Spleen (tissue), 13 donors: ENCODE measurements at regions of chr1 and their contacts with region 1.

Region 1: DNA sequence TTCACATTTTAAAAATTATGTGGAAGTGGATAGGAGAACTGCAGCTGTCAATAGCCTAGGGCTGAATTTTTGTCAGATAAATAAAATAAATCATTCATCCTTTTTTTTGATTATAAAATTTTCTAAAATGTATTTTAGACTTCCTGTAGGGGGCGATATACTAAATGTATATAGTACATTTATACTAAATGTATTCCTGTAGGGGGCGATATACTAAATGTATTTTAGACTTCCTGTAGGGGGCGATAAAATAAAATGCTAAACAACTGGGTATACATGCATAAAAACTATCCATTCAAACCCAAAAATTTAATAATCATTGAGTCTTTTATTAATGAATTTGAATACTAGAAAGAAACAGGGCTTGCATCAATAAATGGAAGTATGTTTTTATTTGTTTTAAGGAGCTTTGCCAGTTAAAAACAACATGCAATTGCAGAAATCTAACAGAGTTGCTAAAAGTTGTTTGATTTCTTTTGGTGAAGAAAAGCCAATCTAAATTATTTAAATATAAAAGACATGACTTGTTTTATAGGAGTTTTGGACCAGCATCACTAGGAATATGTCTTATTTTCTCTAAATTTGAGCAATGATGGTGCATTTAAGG is 31.4 kb downstream of the CLCA1 start:
- DNase-seq: no peak
- H3K4me3 ChIP-seq: no peak overlapping the region
- H3K27ac ChIP-seq: no peak overlapping the region
- H3K4me1 ChIP-seq: peaks cover 0 to 32% (median 12%) of the 10 kb centered on the region in 6 donors
- H3K27me3 ChIP-seq: peaks cover 0 to 4% (median 0%) of the 10 kb centered on the region in 7 donors
- CTCF ChIP-seq: peak; percentile 68 to 90 (median 83)
- POLR2A ChIP-seq: no peak

Region 2: GRCh38 chr1:86687595-86687994 is 187.5 kb after region 1 on chr1:
- intact Hi-C with region 1: loop called (anchors 10 kb)
- DNase-seq: no peak
- H3K4me3 ChIP-seq: no peak overlapping the region
- H3K27ac ChIP-seq: no peak overlapping the region
- H3K4me1 ChIP-seq: no peaks in the 10 kb centered on the region
- H3K27me3 ChIP-seq: no peaks in the 10 kb centered on the region
- CTCF ChIP-seq: peak in 5 of 11 experiments; percentile 8 to 21 (median 14)
- POLR2A ChIP-seq: no peak